ENCODE measurements at regions of chr7 and their contacts with region 1.

Region 1: DNA sequence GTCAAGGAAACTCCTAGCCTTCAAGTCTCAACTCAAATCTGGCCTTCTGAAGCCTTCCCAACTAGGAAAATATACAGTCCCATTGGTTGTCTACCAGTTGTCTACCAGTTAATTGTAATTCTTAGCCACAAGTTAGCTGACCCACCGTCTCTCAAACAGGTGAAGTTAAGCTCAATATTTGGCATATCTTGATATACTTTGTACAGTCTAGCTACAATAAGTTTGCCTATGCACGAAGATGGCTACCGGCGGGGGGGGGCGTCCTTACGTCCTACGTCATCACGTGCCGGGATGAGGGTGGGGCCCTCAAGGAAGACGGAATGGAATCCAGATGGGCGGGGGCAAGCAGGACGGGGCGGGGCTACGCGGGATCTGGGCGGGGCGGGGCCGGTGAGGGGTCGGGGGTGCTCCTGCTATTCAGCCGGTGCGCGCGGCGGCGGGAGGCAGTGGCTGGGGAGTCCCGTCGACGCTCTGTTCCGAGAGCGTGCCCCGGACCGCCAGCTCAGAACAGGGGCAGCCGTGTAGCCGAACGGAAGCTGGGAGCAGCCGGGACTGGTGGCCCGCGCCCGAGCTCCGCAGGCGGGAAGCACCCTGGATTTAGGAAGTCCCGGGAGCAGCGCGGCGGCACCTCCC is at the start of gene AHR:
- DNase-seq: peak; percentile 94
- ATAC-seq: peak; percentile 85
- H3K4me3 Mint-ChIP-seq: peak within 1 kb of the TSS; percentile 87
- H3K27ac Mint-ChIP-seq: peak within 1 kb of the TSS; percentile 96
- H3K4me1 Mint-ChIP-seq: peaks cover 19% of the 10 kb centered on the region
- H3K27me3 Mint-ChIP-seq: no peaks in the 10 kb centered on the region
- total RNA-seq, gene AHR: 36.7 to 42.3 TPM

Region 2: GRCh38 chr7:16982640-16983350 is 315.5 kb before region 1 on chr7:
- CTCF ChIA-PET with region 1: interaction called, 13 read pairs
- POLR2A ChIA-PET with region 1: interaction called, 3 read pairs
- intact Hi-C with region 1: loop called (anchors 1 kb)
- DNase-seq: peak; percentile 45
- ATAC-seq: no peak
- H3K4me3 Mint-ChIP-seq: no peak overlapping the region
- H3K27ac Mint-ChIP-seq: no peak overlapping the region
- H3K4me1 Mint-ChIP-seq: peaks cover 6% of the 10 kb centered on the region
- H3K27me3 Mint-ChIP-seq: peaks cover 5% of the 10 kb centered on the region

Region 3: DNA sequence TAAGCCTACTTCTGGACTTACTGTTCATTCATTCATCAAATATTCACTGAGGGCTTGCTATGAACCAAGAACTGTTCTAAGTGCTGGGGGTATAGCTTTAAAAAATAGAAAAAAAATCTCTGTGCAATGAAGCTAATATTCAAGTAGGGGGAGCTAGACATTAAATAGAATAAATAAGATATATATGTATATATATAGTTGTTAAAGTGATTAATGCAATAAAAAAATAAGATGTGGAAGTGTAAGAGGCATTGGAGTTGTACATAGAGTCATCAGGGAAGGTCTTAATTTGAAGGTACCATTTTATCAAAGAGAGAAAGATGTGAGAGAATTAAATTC is 235.3 kb before region 1 on chr7:
- CTCF ChIA-PET with region 1: interaction called, 7 read pairs
- POLR2A ChIA-PET with region 1: no interaction called
- intact Hi-C with region 1: loop called (anchors 5 kb)
- DNase-seq: no peak
- ATAC-seq: no peak
- H3K4me3 Mint-ChIP-seq: no peak overlapping the region
- H3K27ac Mint-ChIP-seq: no peak overlapping the region
- H3K4me1 Mint-ChIP-seq: peaks cover 15% of the 10 kb centered on the region
- H3K27me3 Mint-ChIP-seq: no peaks in the 10 kb centered on the region

Region 4: GRCh38 chr7:17144322-17144721 is 154.0 kb before region 1 on chr7:
- CTCF ChIA-PET with region 1: interaction called, 3 read pairs
- POLR2A ChIA-PET with region 1: no interaction called
- intact Hi-C with region 1: loop called (anchors 1 to 2 kb)
- DNase-seq: peak; percentile 79
- ATAC-seq: peak; percentile 88
- H3K4me3 Mint-ChIP-seq: peak overlapping the region; percentile 53
- H3K27ac Mint-ChIP-seq: peak overlapping the region; percentile 83
- H3K4me1 Mint-ChIP-seq: peaks cover 51% of the 10 kb centered on the region
- H3K27me3 Mint-ChIP-seq: peaks cover 2% of the 10 kb centered on the region

Region 5: GRCh38 chr7:17255926-17256325 is 42.4 kb before region 1 on chr7:
- CTCF ChIA-PET with region 1: no interaction called
- POLR2A ChIA-PET with region 1: interaction called, 4 read pairs
- intact Hi-C with region 1: loop called (anchors 1 kb)
- DNase-seq: no peak
- ATAC-seq: no peak
- H3K4me3 Mint-ChIP-seq: no peak overlapping the region
- H3K27ac Mint-ChIP-seq: no peak overlapping the region
- H3K4me1 Mint-ChIP-seq: peaks cover 18% of the 10 kb centered on the region
- H3K27me3 Mint-ChIP-seq: no peaks in the 10 kb centered on the region

Region 6: DNA sequence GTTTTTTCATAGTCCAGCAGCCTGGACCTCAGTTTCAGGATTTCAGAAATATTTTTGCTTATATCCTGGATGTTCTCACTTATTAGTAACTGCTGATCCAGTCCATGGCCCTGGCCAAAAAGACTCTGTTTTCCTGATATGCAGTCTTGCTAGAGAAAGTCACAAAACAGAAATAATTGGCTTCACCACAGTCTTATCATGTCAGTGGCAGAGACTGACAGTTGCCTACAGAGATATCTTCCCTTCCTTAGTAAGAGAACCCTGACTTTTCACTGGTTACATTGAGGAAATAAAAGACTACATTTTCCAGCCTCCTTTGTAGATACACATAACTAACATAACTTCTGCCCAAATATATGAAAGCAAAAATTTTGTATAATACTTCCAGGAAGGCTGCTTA is 56.7 kb after region 1 on chr7:
- CTCF ChIA-PET with region 1: no interaction called
- POLR2A ChIA-PET with region 1: no interaction called
- intact Hi-C with region 1: no loop called
- DNase-seq: no peak
- ATAC-seq: no peak
- H3K4me3 Mint-ChIP-seq: no peak overlapping the region
- H3K27ac Mint-ChIP-seq: no peak overlapping the region
- H3K4me1 Mint-ChIP-seq: no peaks in the 10 kb centered on the region
- H3K27me3 Mint-ChIP-seq: no peaks in the 10 kb centered on the region

Region 7: GRCh38 chr7:17530741-17531417 is 232.6 kb after region 1 on chr7:
- CTCF ChIA-PET with region 1: no interaction called
- POLR2A ChIA-PET with region 1: no interaction called
- intact Hi-C with region 1: loop called (anchors 2 kb)
- DNase-seq: no peak
- ATAC-seq: peak; percentile 61
- H3K4me3 Mint-ChIP-seq: no peak overlapping the region
- H3K27ac Mint-ChIP-seq: no peak overlapping the region
- H3K4me1 Mint-ChIP-seq: no peaks in the 10 kb centered on the region
- H3K27me3 Mint-ChIP-seq: peaks cover 4% of the 10 kb centered on the region

Measured in activated CD4-positive, alpha-beta T cell treated with anti-CD3 and anti-CD28 coated beads for 36 hours (primary cell).